Dorsolateral prefrontal cortex (tissue), 120 donors: ENCODE measurements at regions of chr11 and their contacts with region 1.

Region 1: GRCh38 chr11:124961972-124962609 is 8.1 kb downstream of the CCDC15 start:
- DNase-seq: no peak
- H3K4me3 ChIP-seq: no peak overlapping the region
- H3K27ac ChIP-seq: no peak overlapping the region
- H3K27me3 ChIP-seq: no peaks in the 10 kb centered on the region
- CTCF ChIP-seq: peak; percentile 48 to 95 (median 78)

Region 2: GRCh38 chr11:124863137-124863825 is 98.8 kb before region 1 on chr11:
- intact Hi-C with region 1: no loop called
- DNase-seq: peak in 6 of 10 donors; percentile 30 to 59 (median 49)
- H3K4me3 ChIP-seq: peak overlapping the region in 58 of 59 donors; percentile 1 to 68 (median 40)
- H3K27ac ChIP-seq: no peak overlapping the region
- H3K27me3 ChIP-seq: peaks cover under 1 to 68% (median 45%) of the 10 kb centered on the region in 45 donors
- CTCF ChIP-seq: peak in 10 of 56 donors; percentile 6 to 27 (median 14)

Region 3: GRCh38 chr11:125141686-125142535 is 179.8 kb after region 1 on chr11:
- intact Hi-C with region 1: loop called (anchors 2 to 10 kb)
- DNase-seq: peak in 5 of 10 donors; percentile 22 to 65 (median 43)
- H3K4me3 ChIP-seq: peak overlapping the region in 4 of 59 donors; percentile 7 to 25 (median 14)
- H3K27ac ChIP-seq: no peak overlapping the region
- H3K27me3 ChIP-seq: peaks cover 0 to 11% (median 0%) of the 10 kb centered on the region in 45 donors
- CTCF ChIP-seq: peak; percentile 83 to 99 (median 95)